ENCODE measurements at regions of chr13 and their contacts with region 1.

Region 1: GRCh38 chr13:45047394-45048310 is 58.3 kb downstream of the GPALPP1 start:
- DNase-seq: peak; percentile 90
- ATAC-seq: peak; percentile 85
- H3K4me3 Mint-ChIP-seq: peak overlapping the region; percentile 54
- H3K27ac Mint-ChIP-seq: no peak overlapping the region
- H3K4me1 Mint-ChIP-seq: peaks cover 18% of the 10 kb centered on the region
- H3K27me3 Mint-ChIP-seq: peaks cover 29% of the 10 kb centered on the region

Region 2: DNA sequence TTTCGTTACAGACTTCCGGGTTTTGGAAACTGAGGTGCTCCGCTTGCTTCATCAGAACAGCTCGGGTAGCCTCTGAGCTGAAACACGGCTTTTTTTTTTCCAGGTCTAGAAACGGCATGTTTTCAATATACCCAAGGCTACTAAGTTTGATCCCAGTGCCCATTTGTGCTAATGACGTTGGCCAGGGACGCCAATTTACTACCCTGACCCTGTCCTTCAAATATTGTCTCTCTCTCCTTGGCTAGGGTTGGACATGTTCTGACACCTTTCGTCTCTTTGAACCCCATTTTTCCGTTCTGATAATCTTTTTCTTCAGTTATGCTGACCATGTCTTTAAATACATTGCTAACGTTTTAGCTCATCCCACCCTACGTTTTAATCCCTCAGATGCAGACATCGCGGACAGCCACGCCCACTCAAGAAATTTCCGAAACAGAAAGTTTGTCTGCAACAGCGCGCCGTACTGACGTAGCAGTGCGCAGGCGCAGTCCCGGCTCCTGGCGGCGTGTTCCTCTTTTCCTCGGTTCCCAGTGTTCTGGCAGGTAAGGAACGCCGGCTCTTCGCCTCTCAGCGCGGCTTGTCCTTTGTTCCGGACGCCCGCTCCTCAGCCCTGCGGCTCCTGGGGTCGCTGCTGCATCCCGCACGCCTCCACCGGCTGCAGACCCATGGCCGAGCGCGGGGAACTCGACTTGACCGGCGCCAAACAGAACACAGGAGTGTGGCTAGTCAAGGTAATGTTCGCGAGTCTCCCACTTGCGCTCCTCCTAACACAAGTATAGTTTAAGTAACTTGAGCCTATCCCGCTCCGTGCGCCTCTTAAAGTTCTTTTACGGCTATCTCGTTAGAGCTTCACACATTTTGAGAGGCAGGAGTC is 72.6 kb after region 1 on chr13 and contains the start of gene GTF2F2:
- CTCF ChIA-PET with region 1: interaction called, 3 read pairs
- POLR2A ChIA-PET with region 1: no interaction called
- intact Hi-C with region 1: loop called (anchors 1 to 2 kb)
- DNase-seq: peak; percentile 90
- ATAC-seq: peak; percentile 68
- H3K4me3 Mint-ChIP-seq: no peak within 1 kb of the TSS
- H3K27ac Mint-ChIP-seq: no peak within 1 kb of the TSS
- H3K4me1 Mint-ChIP-seq: peaks cover 5% of the 10 kb centered on the region
- H3K27me3 Mint-ChIP-seq: no peaks in the 10 kb centered on the region
- total RNA-seq, gene GTF2F2: 19.9 to 25.6 TPM

Region 3: GRCh38 chr13:45257638-45258338 is 210.1 kb after region 1 on chr13:
- CTCF ChIA-PET with region 1: interaction called, 4 read pairs
- POLR2A ChIA-PET with region 1: no interaction called
- intact Hi-C with region 1: loop called in 1 of 2 experiments (anchors 5 kb)
- DNase-seq: no peak
- ATAC-seq: no peak
- H3K4me3 Mint-ChIP-seq: no peak overlapping the region
- H3K27ac Mint-ChIP-seq: no peak overlapping the region
- H3K4me1 Mint-ChIP-seq: peaks cover 29% of the 10 kb centered on the region
- H3K27me3 Mint-ChIP-seq: no peaks in the 10 kb centered on the region

Region 4: GRCh38 chr13:45280751-45281634 is 233.3 kb after region 1 on chr13:
- CTCF ChIA-PET with region 1: interaction called, 78 read pairs
- POLR2A ChIA-PET with region 1: no interaction called
- intact Hi-C with region 1: loop called (anchors 1 kb)
- DNase-seq: peak; percentile 81
- ATAC-seq: peak; percentile 100
- H3K4me3 Mint-ChIP-seq: no peak overlapping the region
- H3K27ac Mint-ChIP-seq: no peak overlapping the region
- H3K4me1 Mint-ChIP-seq: peaks cover 7% of the 10 kb centered on the region
- H3K27me3 Mint-ChIP-seq: no peaks in the 10 kb centered on the region

Region 5: GRCh38 chr13:45297456-45298205 is 250.0 kb after region 1 on chr13:
- CTCF ChIA-PET with region 1: interaction called, 12 read pairs
- POLR2A ChIA-PET with region 1: interaction called, 4 read pairs
- intact Hi-C with region 1: no loop called
- DNase-seq: peak; percentile 57
- ATAC-seq: peak; percentile 91
- H3K4me3 Mint-ChIP-seq: no peak overlapping the region
- H3K27ac Mint-ChIP-seq: peak overlapping the region; percentile 72
- H3K4me1 Mint-ChIP-seq: peaks cover 42% of the 10 kb centered on the region
- H3K27me3 Mint-ChIP-seq: no peaks in the 10 kb centered on the region

Region 6: GRCh38 chr13:45310341-45311125 is 262.9 kb after region 1 on chr13:
- CTCF ChIA-PET with region 1: interaction called, 88 read pairs
- POLR2A ChIA-PET with region 1: interaction called, 3 read pairs
- intact Hi-C with region 1: loop called (anchors 1 kb)
- DNase-seq: no peak
- ATAC-seq: no peak
- H3K4me3 Mint-ChIP-seq: peak overlapping the region; percentile 68
- H3K27ac Mint-ChIP-seq: peak overlapping the region; percentile 65
- H3K4me1 Mint-ChIP-seq: peaks cover 20% of the 10 kb centered on the region
- H3K27me3 Mint-ChIP-seq: peaks cover 13% of the 10 kb centered on the region

Region 7: GRCh38 chr13:45393941-45394570 is 346.4 kb after region 1 on chr13:
- CTCF ChIA-PET with region 1: interaction called, 7 read pairs
- POLR2A ChIA-PET with region 1: no interaction called
- intact Hi-C with region 1: loop called in 1 of 2 experiments (anchors 2 kb)
- DNase-seq: peak; percentile 56
- ATAC-seq: no peak
- H3K4me3 Mint-ChIP-seq: no peak overlapping the region
- H3K27ac Mint-ChIP-seq: no peak overlapping the region
- H3K4me1 Mint-ChIP-seq: peaks cover 46% of the 10 kb centered on the region
- H3K27me3 Mint-ChIP-seq: no peaks in the 10 kb centered on the region